Dorsolateral prefrontal cortex (tissue), 120 donors: ENCODE measurements at regions of chr2 and their contacts with region 1.

Region 1: GRCh38 chr2:177552422-177553175 is 160.0 kb downstream of the AGPS start:
- DNase-seq: peak; percentile 84 to 91 (median 86)
- H3K4me3 ChIP-seq: peak overlapping the region; percentile 51 to 99 (median 86)
- H3K27ac ChIP-seq: peak overlapping the region; percentile 87 to 100 (median 98)
- H3K27me3 ChIP-seq: no peaks in the 10 kb centered on the region
- CTCF ChIP-seq: peak in 19 of 56 donors; percentile 11 to 59 (median 22)

Region 2: DNA sequence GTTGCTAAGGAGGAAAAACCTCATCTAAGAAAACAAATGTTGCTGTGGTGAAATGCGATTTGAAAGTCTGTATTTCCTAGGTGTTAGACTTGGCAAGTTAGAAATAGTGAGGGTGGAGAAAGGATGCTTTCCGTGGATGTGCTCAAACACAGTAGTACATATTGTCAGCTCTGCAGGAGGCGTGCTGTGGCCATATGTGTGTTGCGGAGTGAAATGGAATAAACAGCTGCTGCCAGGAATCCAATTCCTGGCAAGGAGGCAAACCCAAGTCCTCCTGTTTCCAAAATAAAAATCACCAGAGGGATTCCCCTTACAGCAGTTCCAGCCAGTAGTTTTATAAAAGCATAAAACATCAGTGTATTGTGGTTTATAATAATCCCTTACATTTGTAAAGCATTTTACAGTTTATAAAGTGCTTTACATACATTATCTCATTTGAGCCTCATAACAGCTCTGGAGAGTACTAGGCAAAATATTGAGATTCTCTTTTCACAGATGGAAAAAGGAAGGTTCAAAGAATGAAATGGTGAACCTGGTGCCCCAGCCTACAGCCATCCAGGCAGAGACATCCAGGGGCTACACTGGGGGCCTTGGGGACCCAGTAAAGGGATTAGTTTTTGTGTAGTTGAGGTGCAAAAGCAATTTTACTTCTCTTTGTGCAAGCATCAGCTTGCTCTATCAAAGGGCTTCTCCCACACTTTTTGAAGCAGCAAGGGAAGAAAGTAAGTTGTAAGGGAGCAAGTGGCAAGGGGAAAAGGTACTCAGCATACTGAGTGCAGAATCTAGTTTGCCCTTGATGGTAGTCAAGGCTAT is 45.9 kb after region 1 on chr2:
- intact Hi-C with region 1: loop called in 1 of 2 experiments (anchors 5 kb)
- DNase-seq: peak in 9 of 10 donors; percentile 24 to 74 (median 66)
- H3K4me3 ChIP-seq: peak overlapping the region in 9 of 59 donors; percentile 1 to 19 (median 4)
- H3K27ac ChIP-seq: peak overlapping the region in 8 of 59 donors; percentile 6 to 76 (median 21)
- H3K27me3 ChIP-seq: no peaks in the 10 kb centered on the region
- CTCF ChIP-seq: no peak

Region 3: GRCh38 chr2:177753682-177754491 is 201.3 kb after region 1 on chr2:
- intact Hi-C with region 1: no loop called
- DNase-seq: peak in 9 of 10 donors; percentile 4 to 78 (median 54)
- H3K4me3 ChIP-seq: no peak overlapping the region
- H3K27ac ChIP-seq: peak overlapping the region in 27 of 59 donors; percentile 5 to 67 (median 33)
- H3K27me3 ChIP-seq: no peaks in the 10 kb centered on the region
- CTCF ChIP-seq: no peak